Left colon (tissue), 2 donors: ENCODE measurements at regions of chr4 and their contacts with region 1.

Region 1: DNA sequence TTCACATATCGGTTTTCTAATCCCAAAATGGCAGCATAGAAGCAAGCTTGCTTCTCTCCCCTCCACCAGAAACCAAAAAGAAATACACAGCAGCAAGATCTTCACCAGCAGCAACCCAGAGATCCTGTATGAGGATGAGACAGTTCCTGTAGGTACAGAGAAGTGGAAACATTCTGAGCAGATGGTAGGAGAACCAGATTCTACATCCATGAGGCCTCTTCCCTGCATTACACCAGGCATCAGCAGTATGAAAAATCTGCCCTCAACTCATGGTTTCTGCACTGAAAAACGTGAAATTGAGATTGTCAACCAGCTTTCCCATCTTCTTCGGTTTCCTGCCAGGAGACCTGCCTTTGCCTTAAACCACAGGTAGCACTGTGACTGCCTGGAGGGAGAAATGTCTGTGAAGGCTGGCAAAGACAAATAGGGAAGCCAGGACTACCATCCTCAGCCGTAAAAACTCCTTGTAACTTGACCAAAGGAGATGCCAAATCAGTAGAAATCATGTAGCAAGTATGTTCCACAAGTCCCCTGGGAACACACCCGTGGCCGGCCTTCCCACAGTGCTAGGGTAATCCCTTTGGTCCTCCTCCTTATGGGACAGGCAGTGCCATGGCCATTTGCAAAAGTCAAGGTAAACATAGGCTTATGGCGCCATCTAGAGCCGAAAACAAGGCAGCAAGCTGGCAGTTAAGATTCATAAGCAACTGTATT is 24.0 kb upstream of the MTHFD2L start:
- DNase-seq: peak; percentile 64 to 80
- ATAC-seq: peak; percentile 95

Region 2: DNA sequence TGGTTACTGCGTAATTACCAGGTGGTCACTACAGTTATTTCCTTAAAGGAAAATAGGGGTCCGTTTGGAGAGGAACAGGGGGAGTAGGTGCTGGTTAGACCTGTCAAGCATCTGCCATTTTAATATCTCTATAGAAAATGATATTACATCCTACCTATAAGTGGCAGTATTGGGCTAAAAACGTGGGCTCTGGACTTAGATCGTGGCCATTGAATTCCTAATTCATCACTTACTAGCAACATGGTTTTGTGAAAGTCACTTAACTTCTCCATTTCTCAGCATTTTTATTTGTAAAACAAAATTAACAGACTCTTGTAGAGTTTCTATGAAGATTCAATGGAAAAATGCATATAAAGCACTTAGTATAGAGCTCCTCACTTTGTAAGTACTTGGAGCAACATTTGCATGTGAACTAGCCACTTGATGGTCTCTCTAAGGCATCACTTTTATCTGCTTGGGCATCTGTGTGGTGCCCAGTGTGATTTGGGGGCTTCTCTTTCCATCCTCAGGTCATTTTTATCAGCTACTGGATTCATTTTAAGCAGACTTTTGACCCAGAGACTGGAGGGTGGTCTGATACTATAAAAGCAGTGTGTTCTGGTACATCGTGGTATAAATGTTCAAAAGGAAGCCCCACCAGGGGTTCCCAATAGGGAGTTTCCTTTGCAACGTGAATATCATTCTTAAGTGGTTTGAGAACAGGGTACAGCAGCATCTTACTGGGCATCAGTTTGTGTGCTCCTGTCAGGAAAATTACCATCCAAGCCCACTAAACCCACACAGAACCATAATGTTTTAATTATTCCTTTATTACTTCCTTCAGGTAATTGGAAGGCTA is 471.0 kb before region 1 on chr4:
- intact Hi-C with region 1: loop called in 1 of 2 experiments (anchors 10 kb)
- DNase-seq: no peak
- ATAC-seq: peak; percentile 71

Region 3: GRCh38 chr4:73944061-73944875 is 189.7 kb before region 1 on chr4:
- intact Hi-C with region 1: loop called in 1 of 2 experiments (anchors 10 kb)
- DNase-seq: peak; percentile 23 to 30
- ATAC-seq: peak; percentile 56